GM12878 (cell line): ENCODE measurements at regions of chr15 and their contacts with region 1.

Region 1: GRCh38 chr15:58457381-58457965 is 25.7 kb downstream of the LIPC start:
- DNase-seq: peak; percentile 88
- ATAC-seq: peak; percentile 85
- H3K4me3 ChIP-seq: peak overlapping the region; percentile 44; the same call in 1 of the 2 replicates
- H3K27ac ChIP-seq: peak overlapping the region; percentile 93
- H3K4me1 ChIP-seq: peaks cover 54% of the 10 kb centered on the region
- H3K27me3 ChIP-seq: no peaks in the 10 kb centered on the region
- CTCF ChIP-seq: no peak
- EP300 ChIP-seq: peak; percentile 48 to 91; a peak in 2 of 4 replicates
- POLR2A ChIP-seq: no peak
- RAD21 ChIP-seq: peak; percentile 32

Region 2: DNA sequence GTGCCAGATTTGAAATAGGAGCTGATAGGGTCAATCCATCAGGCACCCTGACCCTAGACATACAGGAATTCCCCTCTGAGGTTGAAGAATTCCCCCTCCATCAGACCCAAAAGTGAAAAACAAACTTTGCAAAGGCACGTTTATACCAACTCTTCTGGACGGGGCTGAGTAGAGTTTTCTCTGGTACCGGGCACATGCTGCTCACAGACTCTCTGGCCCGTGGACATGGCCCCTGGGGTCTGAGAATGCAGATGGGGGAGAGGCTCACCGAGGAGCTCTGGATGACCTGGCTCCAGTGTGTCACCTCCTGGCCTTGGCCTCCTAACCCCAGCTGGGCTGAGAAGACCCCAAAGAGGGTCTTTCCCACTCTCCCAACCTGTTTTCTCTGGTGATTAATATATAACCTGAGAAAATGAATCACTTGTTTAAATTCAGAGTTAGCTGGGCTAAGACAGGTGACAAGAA is 36.9 kb before region 1 on chr15:
- CTCF ChIA-PET with region 1: no interaction called
- POLR2A ChIA-PET with region 1: no interaction called
- RAD21 ChIA-PET with region 1: interaction called, 7 read pairs
- SMC1A ChIA-PET with region 1: interaction called, 13 read pairs
- in situ Hi-C with region 1: no loop called
- intact Hi-C with region 1: loop called (anchors 2 kb)
- DNase-seq: peak; percentile 28
- ATAC-seq: peak; percentile 87
- H3K4me3 ChIP-seq: peak overlapping the region; percentile 30; the same call in 1 of the 2 replicates
- H3K27ac ChIP-seq: peak overlapping the region; percentile 71
- H3K4me1 ChIP-seq: peaks cover 12% of the 10 kb centered on the region
- H3K27me3 ChIP-seq: no peaks in the 10 kb centered on the region
- CTCF ChIP-seq: no peak
- EP300 ChIP-seq: no peak
- POLR2A ChIP-seq: no peak
- RAD21 ChIP-seq: no peak

Region 3: GRCh38 chr15:58469432-58470353 is 12.2 kb after region 1 on chr15:
- CTCF ChIA-PET with region 1: interaction called, 15 read pairs
- POLR2A ChIA-PET with region 1: interaction called, 8 read pairs
- RAD21 ChIA-PET with region 1: interaction called, 24 read pairs
- SMC1A ChIA-PET with region 1: interaction called, 51 read pairs
- in situ Hi-C with region 1: no loop called
- intact Hi-C with region 1: no loop called
- DNase-seq: no peak
- ATAC-seq: no peak
- H3K4me3 ChIP-seq: no peak overlapping the region
- H3K27ac ChIP-seq: no peak overlapping the region
- H3K4me1 ChIP-seq: peaks cover 28% of the 10 kb centered on the region
- H3K27me3 ChIP-seq: no peaks in the 10 kb centered on the region
- CTCF ChIP-seq: no peak
- EP300 ChIP-seq: no peak
- POLR2A ChIP-seq: no peak
- RAD21 ChIP-seq: no peak

Region 4: GRCh38 chr15:58517682-58518525 is 60.4 kb after region 1 on chr15:
- CTCF ChIA-PET with region 1: interaction called, 8 read pairs
- POLR2A ChIA-PET with region 1: interaction called, 5 read pairs
- RAD21 ChIA-PET with region 1: interaction called, 5 read pairs
- SMC1A ChIA-PET with region 1: interaction called, 20 read pairs
- in situ Hi-C with region 1: no loop called
- intact Hi-C with region 1: loop called (anchors 1 kb)
- DNase-seq: peak; percentile 85
- ATAC-seq: peak; percentile 88
- H3K4me3 ChIP-seq: no peak overlapping the region
- H3K27ac ChIP-seq: peak overlapping the region; percentile 95
- H3K4me1 ChIP-seq: peaks cover 59% of the 10 kb centered on the region
- H3K27me3 ChIP-seq: no peaks in the 10 kb centered on the region
- CTCF ChIP-seq: no peak
- EP300 ChIP-seq: peak in 1 of 2 experiments; percentile 54; a peak in 1 of 4 replicates
- POLR2A ChIP-seq: no peak
- RAD21 ChIP-seq: no peak

Region 5: DNA sequence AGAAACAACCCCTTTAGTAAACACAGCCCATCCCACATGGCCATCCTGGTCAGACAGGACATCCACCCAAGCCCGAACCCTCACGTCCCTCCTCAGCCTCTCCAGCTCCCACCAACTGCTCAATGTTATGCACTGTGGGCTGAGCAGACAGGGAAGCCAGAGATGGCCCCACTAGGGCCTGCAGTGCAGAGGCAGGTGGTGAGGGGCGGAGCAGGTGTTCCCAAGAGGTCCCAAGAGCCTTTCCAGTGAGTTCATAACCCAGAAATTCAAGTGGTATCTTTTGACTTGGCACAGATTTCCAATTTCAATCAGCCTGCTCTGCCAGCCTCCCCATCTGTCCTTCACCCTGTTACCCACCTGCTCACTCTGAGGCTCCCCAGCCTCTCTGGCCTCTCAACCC is 104.7 kb after region 1 on chr15:
- CTCF ChIA-PET with region 1: no interaction called
- POLR2A ChIA-PET with region 1: no interaction called
- RAD21 ChIA-PET with region 1: no interaction called
- SMC1A ChIA-PET with region 1: no interaction called
- in situ Hi-C with region 1: no loop called
- intact Hi-C with region 1: no loop called
- DNase-seq: no peak
- ATAC-seq: no peak
- H3K4me3 ChIP-seq: no peak overlapping the region
- H3K27ac ChIP-seq: no peak overlapping the region
- H3K4me1 ChIP-seq: no peaks in the 10 kb centered on the region
- H3K27me3 ChIP-seq: no peaks in the 10 kb centered on the region
- CTCF ChIP-seq: no peak
- EP300 ChIP-seq: no peak
- POLR2A ChIP-seq: no peak
- RAD21 ChIP-seq: no peak

Region 6: GRCh38 chr15:58749532-58750337 is 292.3 kb after region 1 on chr15 and contains the start of gene ADAM10:
- CTCF ChIA-PET with region 1: no interaction called
- POLR2A ChIA-PET with region 1: no interaction called
- RAD21 ChIA-PET with region 1: no interaction called
- SMC1A ChIA-PET with region 1: interaction called, 4 read pairs
- in situ Hi-C with region 1: no loop called
- intact Hi-C with region 1: loop called (anchors 10 kb)
- DNase-seq: peak; percentile 90
- ATAC-seq: peak; percentile 91
- H3K4me3 ChIP-seq: peak within 1 kb of the TSS; percentile 94
- H3K27ac ChIP-seq: peak within 1 kb of the TSS; percentile 91
- H3K4me1 ChIP-seq: no peaks in the 10 kb centered on the region
- H3K27me3 ChIP-seq: no peaks in the 10 kb centered on the region
- CTCF ChIP-seq: no peak
- EP300 ChIP-seq: no peak
- POLR2A ChIP-seq: peak; percentile 80
- RAD21 ChIP-seq: no peak; the same call in 1 of the 2 replicates
- polyA plus RNA-seq, gene ADAM10: 10.0 to 11.1 TPM